Activated B cell treated with CpG ODN at 0.5 μM for 24 hours (primary cell): ENCODE measurements at regions of chr5 and their contacts with region 1.

Region 1: GRCh38 chr5:141359790-141360426 is at the start of gene PCDHGB2:
- DNase-seq: no peak
- ATAC-seq: no peak
- H3K4me3 Mint-ChIP-seq: peak within 1 kb of the TSS; percentile 79
- H3K27ac Mint-ChIP-seq: peak within 1 kb of the TSS; percentile 60
- H3K4me1 Mint-ChIP-seq: peaks cover 8% of the 10 kb centered on the region
- H3K27me3 Mint-ChIP-seq: peaks cover 59% of the 10 kb centered on the region
- CTCF ChIP-seq: no peak
- total RNA-seq, gene PCDHGB2: 2.2 and 2.6 TPM in 2 replicates

Region 2: DNA sequence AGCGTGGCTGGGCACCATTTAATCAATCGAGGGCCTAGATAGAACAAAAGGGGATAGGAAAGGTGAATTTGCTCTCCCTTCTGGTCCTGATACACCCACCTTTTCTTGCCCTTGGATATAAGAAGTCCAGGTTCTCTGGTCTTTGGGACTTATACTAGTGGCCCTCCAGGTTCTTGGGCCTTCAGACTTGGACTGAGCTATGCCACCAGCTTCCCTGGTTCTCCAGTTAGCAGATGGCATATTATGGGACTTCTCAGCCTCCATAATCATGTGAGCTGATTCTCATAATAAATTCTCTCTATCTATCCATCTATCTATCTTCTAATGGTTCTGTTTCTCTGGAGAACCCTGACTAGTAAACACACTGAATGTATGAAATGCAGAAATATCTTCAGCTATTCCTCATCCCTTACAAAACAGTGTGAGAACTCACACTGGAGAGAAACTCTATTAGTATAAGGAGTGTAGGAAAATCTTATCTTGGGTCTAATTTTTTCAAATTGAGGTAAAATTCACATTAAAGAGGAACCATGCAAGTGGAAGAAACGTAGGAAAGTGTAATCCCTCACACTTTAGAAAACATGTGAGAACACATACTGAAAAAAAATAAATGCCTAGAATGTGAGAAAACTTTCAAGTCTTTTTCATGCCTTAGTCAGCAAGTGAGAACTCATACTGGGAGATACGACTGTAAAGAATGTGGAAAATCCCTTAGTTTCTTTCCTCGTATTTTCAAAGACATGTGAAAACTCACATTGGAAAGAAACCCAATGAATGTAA is 99.3 kb before region 1 on chr5:
- CTCF ChIA-PET with region 1: no interaction called
- POLR2A ChIA-PET with region 1: no interaction called
- intact Hi-C with region 1: no loop called
- DNase-seq: no peak
- ATAC-seq: no peak
- H3K4me3 Mint-ChIP-seq: no peak overlapping the region
- H3K27ac Mint-ChIP-seq: no peak overlapping the region
- H3K4me1 Mint-ChIP-seq: no peaks in the 10 kb centered on the region
- H3K27me3 Mint-ChIP-seq: no peaks in the 10 kb centered on the region
- CTCF ChIP-seq: no peak

Region 3: GRCh38 chr5:141326088-141326854 is 33.6 kb before region 1 on chr5:
- CTCF ChIA-PET with region 1: no interaction called
- POLR2A ChIA-PET with region 1: no interaction called
- intact Hi-C with region 1: loop called (anchors 5 kb)
- DNase-seq: peak; percentile 41
- ATAC-seq: peak; percentile 90
- H3K4me3 Mint-ChIP-seq: peak overlapping the region; percentile 91
- H3K27ac Mint-ChIP-seq: peak overlapping the region; percentile 84
- H3K4me1 Mint-ChIP-seq: peaks cover 10% of the 10 kb centered on the region
- H3K27me3 Mint-ChIP-seq: peaks cover 35% of the 10 kb centered on the region
- CTCF ChIP-seq: no peak